Naive thymus-derived CD4-positive, alpha-beta T cell (primary cell): ENCODE measurements at regions of chr13 and their contacts with region 1.

Region 1: DNA sequence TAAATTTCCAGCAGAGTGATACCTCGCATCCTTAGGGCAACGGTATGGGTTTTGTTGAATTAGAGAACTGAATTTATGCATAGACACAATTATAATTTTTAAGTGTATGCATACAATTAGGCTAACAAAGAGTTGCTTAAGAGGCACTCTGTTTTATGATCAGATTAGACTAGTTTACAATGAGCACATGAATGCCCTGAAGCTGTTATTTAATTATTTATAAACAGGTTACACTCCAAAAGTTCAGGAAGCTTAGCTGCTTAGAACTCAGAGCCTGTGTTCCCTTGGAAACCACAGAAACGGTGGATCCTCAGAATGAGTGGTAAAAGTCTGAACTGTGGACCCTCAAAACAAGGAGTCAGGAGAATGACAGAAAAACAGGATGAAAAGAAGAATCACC is 72.5 kb upstream of the FBXL3 start:
- DNase-seq: no peak
- ATAC-seq: no peak
- H3K4me3 ChIP-seq: no peak overlapping the region
- H3K4me3 Mint-ChIP-seq: no peak overlapping the region
- H3K27ac ChIP-seq: no peak overlapping the region
- H3K27ac Mint-ChIP-seq: peak overlapping the region in 1 of 9 donors; percentile 63
- H3K4me1 ChIP-seq: no peaks in the 10 kb centered on the region
- H3K4me1 Mint-ChIP-seq: peaks cover 0 to 4% (median 0%) of the 10 kb centered on the region in 7 donors
- H3K27me3 ChIP-seq: no peaks in the 10 kb centered on the region
- H3K27me3 Mint-ChIP-seq: no peaks in the 10 kb centered on the region

Region 2: DNA sequence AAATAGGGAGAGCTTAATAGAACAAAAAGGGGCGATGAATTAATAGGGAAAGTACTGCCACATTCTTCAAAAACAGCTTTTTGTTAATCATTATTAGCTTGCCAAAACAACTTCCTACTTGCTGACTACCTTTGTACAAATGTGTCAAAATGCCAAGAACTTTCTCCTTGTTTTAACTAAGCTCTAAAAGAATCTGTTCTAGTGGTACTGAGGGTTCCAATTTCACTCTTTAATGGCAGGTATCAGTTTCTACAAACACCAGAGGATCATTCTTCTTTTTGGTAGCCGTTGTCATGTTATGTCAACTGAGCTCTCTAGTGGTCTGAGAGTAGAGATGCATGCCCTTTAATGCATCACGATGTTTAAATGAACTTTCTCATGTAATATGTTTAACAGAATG is 43.0 kb before region 1 on chr13:
- CTCF ChIA-PET with region 1: no interaction called
- POLR2A ChIA-PET with region 1: no interaction called
- intact Hi-C with region 1: loop called in 1 of 2 experiments (anchors 5 kb)
- DNase-seq: no peak
- ATAC-seq: no peak
- H3K4me3 ChIP-seq: no peak overlapping the region
- H3K4me3 Mint-ChIP-seq: no peak overlapping the region
- H3K27ac ChIP-seq: no peak overlapping the region
- H3K27ac Mint-ChIP-seq: peak overlapping the region in 4 of 9 donors; percentile 10 to 77 (median 24)
- H3K4me1 ChIP-seq: no peaks in the 10 kb centered on the region
- H3K4me1 Mint-ChIP-seq: no peaks in the 10 kb centered on the region
- H3K27me3 ChIP-seq: no peaks in the 10 kb centered on the region
- H3K27me3 Mint-ChIP-seq: no peaks in the 10 kb centered on the region

Region 3: DNA sequence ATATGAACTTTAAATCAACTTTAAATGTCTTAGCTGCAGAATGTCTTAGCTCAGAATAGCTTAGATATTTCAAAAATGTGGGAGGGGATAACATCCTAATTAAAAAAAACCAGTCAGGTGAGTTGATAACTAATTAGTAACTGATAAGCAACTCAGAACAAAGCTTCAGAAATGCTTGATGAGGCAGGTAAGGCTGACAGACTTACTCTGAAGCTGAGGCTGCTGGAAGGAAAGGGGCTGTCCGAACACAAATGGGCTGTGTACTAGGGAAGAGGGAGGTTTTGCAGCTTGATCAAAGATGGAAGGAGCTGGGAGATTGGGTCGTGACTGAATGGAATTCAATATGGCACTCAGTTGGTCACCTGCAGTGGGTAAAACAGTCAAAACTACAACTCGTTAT is 18.7 kb after region 1 on chr13:
- CTCF ChIA-PET with region 1: no interaction called
- POLR2A ChIA-PET with region 1: no interaction called
- intact Hi-C with region 1: loop called in 1 of 2 experiments (anchors 2 kb)
- DNase-seq: no peak
- ATAC-seq: no peak
- H3K4me3 ChIP-seq: no peak overlapping the region
- H3K4me3 Mint-ChIP-seq: no peak overlapping the region
- H3K27ac ChIP-seq: no peak overlapping the region
- H3K27ac Mint-ChIP-seq: peak overlapping the region in 1 of 9 donors; percentile 8
- H3K4me1 ChIP-seq: no peaks in the 10 kb centered on the region
- H3K4me1 Mint-ChIP-seq: peaks cover 0 to 4% (median 0%) of the 10 kb centered on the region in 7 donors
- H3K27me3 ChIP-seq: no peaks in the 10 kb centered on the region
- H3K27me3 Mint-ChIP-seq: no peaks in the 10 kb centered on the region

Region 4: GRCh38 chr13:77374786-77375185 is 275.4 kb after region 1 on chr13:
- CTCF ChIA-PET with region 1: no interaction called
- POLR2A ChIA-PET with region 1: no interaction called
- intact Hi-C with region 1: no loop called
- DNase-seq: no peak
- ATAC-seq: no peak
- H3K4me3 ChIP-seq: no peak overlapping the region
- H3K4me3 Mint-ChIP-seq: no peak overlapping the region
- H3K27ac ChIP-seq: no peak overlapping the region
- H3K27ac Mint-ChIP-seq: no peak overlapping the region
- H3K4me1 ChIP-seq: no peaks in the 10 kb centered on the region
- H3K4me1 Mint-ChIP-seq: peaks cover 0 to 4% (median 0%) of the 10 kb centered on the region in 7 donors
- H3K27me3 ChIP-seq: no peaks in the 10 kb centered on the region
- H3K27me3 Mint-ChIP-seq: peaks cover 0 to 8% (median 0%) of the 10 kb centered on the region in 5 donors